Caco-2 (cell line): ENCODE measurements at regions of chr11 and their contacts with region 1.

Region 1: DNA sequence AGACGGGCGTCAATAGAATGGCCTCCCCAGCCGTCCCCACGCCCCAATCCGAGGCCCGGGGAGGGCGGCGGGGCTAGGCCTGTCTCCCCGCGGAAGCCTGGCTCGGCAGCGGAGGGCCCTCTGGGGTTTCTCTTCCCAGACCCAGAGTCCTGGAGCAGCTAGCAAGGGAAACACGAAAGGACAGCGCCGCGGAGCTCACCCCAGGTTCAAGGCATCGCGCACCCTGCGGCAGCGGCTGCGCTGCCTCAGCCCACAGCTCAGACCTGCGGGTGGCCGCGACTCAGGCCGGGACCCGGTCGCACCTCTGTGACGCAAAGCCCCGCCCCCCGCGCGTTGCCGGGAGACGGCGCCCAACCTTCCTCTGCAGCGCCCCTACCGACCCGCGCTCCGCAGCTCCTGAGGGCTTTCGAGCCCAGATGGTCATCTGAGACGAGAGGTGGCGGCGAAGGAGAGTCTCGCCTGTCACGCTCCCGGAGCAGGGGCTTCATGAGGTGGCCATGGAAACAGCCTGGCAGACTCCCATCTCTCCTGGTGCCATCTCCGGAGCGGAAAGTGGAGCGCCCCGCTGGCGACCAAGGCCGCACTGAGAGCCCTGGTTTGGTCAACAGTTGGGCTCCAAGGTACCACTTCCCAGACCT is at the start of gene RNF141:
- DNase-seq: peak; percentile 95 to 99
- H3K4me3 ChIP-seq: peak within 1 kb of the TSS; percentile 78
- H3K4me3 Mint-ChIP-seq: peak within 1 kb of the TSS; percentile 73
- H3K27ac Mint-ChIP-seq: peak within 1 kb of the TSS; percentile 79
- H3K4me1 ChIP-seq: peaks cover 19% of the 10 kb centered on the region
- H3K4me1 Mint-ChIP-seq: peaks cover 7% of the 10 kb centered on the region
- H3K27me3 ChIP-seq: no peaks in the 10 kb centered on the region
- H3K27me3 Mint-ChIP-seq: no peaks in the 10 kb centered on the region
- CTCF ChIP-seq: peak; percentile 87 to 90
- total RNA-seq, gene RNF141: 65.2 and 74.8 TPM in 2 replicates

Region 2: DNA sequence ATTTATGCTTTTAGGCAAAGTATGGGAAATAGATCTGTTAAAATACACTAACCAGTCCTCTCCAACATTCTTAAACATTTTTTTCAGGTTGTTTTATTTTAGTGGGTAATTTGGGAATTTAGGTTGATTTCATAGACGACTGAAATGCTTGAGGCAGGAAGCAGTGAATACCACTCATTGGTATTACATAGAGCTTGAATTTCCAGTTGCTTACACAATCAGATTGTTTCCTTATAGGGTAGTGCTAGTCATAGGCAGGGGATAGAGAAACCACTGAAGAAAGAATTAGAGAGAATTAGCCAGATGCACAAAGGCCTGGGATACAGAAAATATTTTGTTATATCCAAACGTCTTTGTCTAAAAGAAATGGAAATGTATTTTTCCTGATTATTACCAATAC is 51.3 kb after region 1 on chr11:
- CTCF ChIA-PET with region 1: no interaction called
- POLR2A ChIA-PET with region 1: no interaction called
- intact Hi-C with region 1: loop called (anchors 5 kb)
- DNase-seq: peak in 1 of 2 experiments; percentile 15
- H3K4me3 ChIP-seq: no peak overlapping the region
- H3K4me3 Mint-ChIP-seq: no peak overlapping the region
- H3K27ac Mint-ChIP-seq: no peak overlapping the region
- H3K4me1 ChIP-seq: peaks cover 6% of the 10 kb centered on the region; the same call in 1 of the 2 replicates
- H3K4me1 Mint-ChIP-seq: peaks cover 10% of the 10 kb centered on the region
- H3K27me3 ChIP-seq: no peaks in the 10 kb centered on the region
- H3K27me3 Mint-ChIP-seq: no peaks in the 10 kb centered on the region
- CTCF ChIP-seq: no peak

Region 3: DNA sequence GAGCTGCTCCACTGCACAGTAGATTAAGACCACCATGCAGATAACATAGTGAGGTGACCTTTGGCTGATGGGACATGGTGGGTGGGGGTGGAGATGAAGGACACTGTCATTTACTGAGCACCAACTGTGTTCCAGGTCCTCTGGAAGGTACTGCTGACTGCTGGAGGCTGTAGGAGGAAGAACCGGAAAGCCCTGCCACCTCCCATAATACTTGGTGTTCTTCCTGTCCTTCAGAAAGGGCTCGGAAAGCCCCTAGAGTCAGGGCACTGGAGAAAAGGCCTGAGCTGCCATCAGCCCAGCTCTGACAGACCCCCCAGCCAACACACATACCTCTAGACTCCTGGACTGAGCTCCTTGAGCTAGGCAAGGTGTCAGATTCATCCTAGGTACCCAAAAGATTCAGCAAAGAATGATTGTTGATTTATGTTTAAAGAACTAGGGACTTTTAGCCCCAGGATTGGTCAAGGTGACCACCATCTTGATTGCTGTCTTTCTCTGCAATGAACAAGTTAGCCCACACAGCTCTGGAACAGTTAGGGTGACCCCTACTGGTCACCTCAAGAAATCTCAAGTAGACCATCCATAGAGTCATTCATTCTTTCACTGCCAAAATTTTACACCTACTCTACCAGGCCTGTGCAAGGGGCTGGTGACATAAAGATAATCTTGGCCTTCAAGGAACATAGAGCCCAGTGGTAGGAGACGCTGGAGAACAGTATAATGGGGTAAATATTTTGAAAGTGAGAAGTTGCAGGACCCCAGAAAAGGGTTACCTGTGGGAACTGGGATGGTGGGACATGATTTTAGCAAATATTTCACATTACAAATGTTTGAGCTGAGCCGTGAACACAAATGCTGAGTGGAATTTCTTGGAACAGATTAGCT is 113.1 kb after region 1 on chr11:
- CTCF ChIA-PET with region 1: interaction called, 7 read pairs
- POLR2A ChIA-PET with region 1: no interaction called
- intact Hi-C with region 1: loop called (anchors 5 kb)
- DNase-seq: no peak
- H3K4me3 ChIP-seq: no peak overlapping the region
- H3K4me3 Mint-ChIP-seq: no peak overlapping the region
- H3K27ac Mint-ChIP-seq: peak overlapping the region; percentile 97
- H3K4me1 ChIP-seq: peaks cover 64% of the 10 kb centered on the region
- H3K4me1 Mint-ChIP-seq: peaks cover 16% of the 10 kb centered on the region
- H3K27me3 ChIP-seq: no peaks in the 10 kb centered on the region
- H3K27me3 Mint-ChIP-seq: no peaks in the 10 kb centered on the region
- CTCF ChIP-seq: peak; percentile 34 to 60